CD8-positive, alpha-beta T cell (primary cell): ENCODE measurements at regions of chr4 and their contacts with region 1.

Region 1: GRCh38 chr4:71009890-71010588 is 16.6 kb downstream of the DCK start:
- DNase-seq: peak in 2 of 9 experiments; percentile 65 to 74
- ATAC-seq: peak; percentile 74
- H3K4me3 ChIP-seq: no peak overlapping the region
- H3K4me3 Mint-ChIP-seq: peak overlapping the region; percentile 5
- H3K27ac ChIP-seq: no peak overlapping the region
- H3K27ac Mint-ChIP-seq: peak overlapping the region; percentile 46
- H3K4me1 ChIP-seq: peaks cover 20% of the 10 kb centered on the region
- H3K4me1 Mint-ChIP-seq: peaks cover 50% of the 10 kb centered on the region
- H3K27me3 ChIP-seq: no peaks in the 10 kb centered on the region
- H3K27me3 Mint-ChIP-seq: no peaks in the 10 kb centered on the region
- CTCF ChIP-seq: peak; percentile 72

Region 2: DNA sequence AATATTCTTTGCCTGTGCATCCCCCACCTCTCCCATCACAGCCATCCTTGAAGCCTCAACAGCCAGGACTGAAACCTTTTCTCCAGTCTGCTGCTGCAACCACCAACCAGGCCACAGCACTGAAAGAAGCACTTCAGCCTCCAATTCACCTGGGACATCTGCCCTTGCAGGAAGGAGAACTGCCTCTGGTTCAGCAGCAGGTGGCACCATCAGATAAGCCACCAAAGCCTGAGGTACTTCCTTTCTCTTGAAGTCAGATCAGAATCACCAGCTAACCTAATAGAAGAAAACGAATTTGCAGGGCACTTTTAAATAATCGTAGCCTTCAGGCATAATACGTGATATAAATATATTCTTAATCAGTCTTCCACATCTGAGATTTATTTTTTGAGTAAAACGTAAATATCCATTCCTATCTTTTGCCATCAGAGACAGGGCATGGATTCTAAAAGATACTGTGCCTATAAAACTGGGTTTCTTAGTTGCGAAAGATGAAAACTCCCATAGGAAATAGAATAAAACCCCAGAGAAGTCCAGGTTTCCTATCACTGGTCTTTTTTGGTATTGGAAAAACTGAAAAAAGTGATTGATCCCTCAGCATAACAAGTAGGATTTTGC is 408.5 kb before region 1 on chr4:
- CTCF ChIA-PET with region 1: interaction called, 6 read pairs
- POLR2A ChIA-PET with region 1: no interaction called
- intact Hi-C with region 1: loop called in 1 of 2 experiments (anchors 1 kb)
- DNase-seq: peak; percentile 34 to 79 (median 61)
- ATAC-seq: peak; percentile 77
- H3K4me3 ChIP-seq: no peak overlapping the region
- H3K4me3 Mint-ChIP-seq: no peak overlapping the region
- H3K27ac ChIP-seq: no peak overlapping the region
- H3K27ac Mint-ChIP-seq: no peak overlapping the region
- H3K4me1 ChIP-seq: peaks cover 6% of the 10 kb centered on the region
- H3K4me1 Mint-ChIP-seq: no peaks in the 10 kb centered on the region
- H3K27me3 ChIP-seq: no peaks in the 10 kb centered on the region
- H3K27me3 Mint-ChIP-seq: peaks cover 4% of the 10 kb centered on the region
- CTCF ChIP-seq: peak; percentile 90

Region 3: GRCh38 chr4:70829492-70829891 is 180.5 kb before region 1 on chr4:
- CTCF ChIA-PET with region 1: no interaction called
- POLR2A ChIA-PET with region 1: no interaction called
- intact Hi-C with region 1: no loop called
- DNase-seq: no peak
- ATAC-seq: no peak
- H3K4me3 ChIP-seq: no peak overlapping the region
- H3K4me3 Mint-ChIP-seq: no peak overlapping the region
- H3K27ac ChIP-seq: no peak overlapping the region
- H3K27ac Mint-ChIP-seq: no peak overlapping the region
- H3K4me1 ChIP-seq: no peaks in the 10 kb centered on the region
- H3K4me1 Mint-ChIP-seq: peaks cover 8% of the 10 kb centered on the region
- H3K27me3 ChIP-seq: no peaks in the 10 kb centered on the region
- H3K27me3 Mint-ChIP-seq: no peaks in the 10 kb centered on the region
- CTCF ChIP-seq: no peak

Region 4: GRCh38 chr4:70984589-70984988 is 25.4 kb before region 1 on chr4:
- CTCF ChIA-PET with region 1: interaction called, 25 read pairs
- POLR2A ChIA-PET with region 1: interaction called, 3 read pairs
- intact Hi-C with region 1: loop called (anchors 1 kb)
- DNase-seq: peak in 2 of 9 experiments; percentile 39 to 51
- ATAC-seq: peak; percentile 58
- H3K4me3 ChIP-seq: no peak overlapping the region
- H3K4me3 Mint-ChIP-seq: no peak overlapping the region
- H3K27ac ChIP-seq: no peak overlapping the region
- H3K27ac Mint-ChIP-seq: no peak overlapping the region
- H3K4me1 ChIP-seq: no peaks in the 10 kb centered on the region
- H3K4me1 Mint-ChIP-seq: no peaks in the 10 kb centered on the region
- H3K27me3 ChIP-seq: no peaks in the 10 kb centered on the region
- H3K27me3 Mint-ChIP-seq: no peaks in the 10 kb centered on the region
- CTCF ChIP-seq: peak; percentile 62

Region 5: GRCh38 chr4:71366766-71367165 is 356.7 kb after region 1 on chr4:
- CTCF ChIA-PET with region 1: no interaction called
- POLR2A ChIA-PET with region 1: no interaction called
- intact Hi-C with region 1: no loop called
- DNase-seq: no peak
- ATAC-seq: no peak
- H3K4me3 ChIP-seq: no peak overlapping the region
- H3K4me3 Mint-ChIP-seq: no peak overlapping the region
- H3K27ac ChIP-seq: no peak overlapping the region
- H3K27ac Mint-ChIP-seq: no peak overlapping the region
- H3K4me1 ChIP-seq: no peaks in the 10 kb centered on the region
- H3K4me1 Mint-ChIP-seq: no peaks in the 10 kb centered on the region
- H3K27me3 ChIP-seq: no peaks in the 10 kb centered on the region
- H3K27me3 Mint-ChIP-seq: no peaks in the 10 kb centered on the region
- CTCF ChIP-seq: no peak